Tibial artery (tissue), 4 donors: ENCODE measurements at regions of chr6 and their contacts with region 1.

Region 1: GRCh38 chr6:169789982-169790927 is 38.8 kb downstream of the ERMARD start:
- DNase-seq: peak; percentile 55 to 82
- H3K4me3 ChIP-seq: peak overlapping the region; percentile 47 to 55
- H3K27ac ChIP-seq: peak overlapping the region; percentile 55 to 61
- H3K4me1 ChIP-seq: peaks cover 0 to 14% (median 5%) of the 10 kb centered on the region in 4 donors
- H3K27me3 ChIP-seq: peaks cover 0 to 5% of the 10 kb centered on the region in 2 donors
- CTCF ChIP-seq: peak; percentile 93 to 98

Region 2: GRCh38 chr6:169810066-169810989 is 20.1 kb after region 1 on chr6:
- intact Hi-C with region 1: no loop called
- DNase-seq: no peak
- H3K4me3 ChIP-seq: no peak overlapping the region
- H3K27ac ChIP-seq: no peak overlapping the region
- H3K4me1 ChIP-seq: no peaks in the 10 kb centered on the region
- H3K27me3 ChIP-seq: no peaks in the 10 kb centered on the region
- CTCF ChIP-seq: no peak

Region 3: GRCh38 chr6:170286246-170286933 is 496.1 kb after region 1 on chr6:
- intact Hi-C with region 1: loop called (anchors 5 kb)
- DNase-seq: no peak
- H3K4me3 ChIP-seq: no peak overlapping the region
- H3K27ac ChIP-seq: no peak overlapping the region
- H3K4me1 ChIP-seq: peaks cover 0 to 27% (median 19%) of the 10 kb centered on the region in 4 donors
- H3K27me3 ChIP-seq: peaks cover 2 to 37% of the 10 kb centered on the region in 2 donors
- CTCF ChIP-seq: no peak